Gastrocnemius medialis (tissue), 4 donors: ENCODE measurements at regions of chr13 and their contacts with region 1.

Region 1: GRCh38 chr13:97124916-97125809 is 97.0 kb upstream of the MBNL2 start:
- DNase-seq: peak; percentile 67 to 77
- ATAC-seq: peak; percentile 88 to 92
- H3K4me3 ChIP-seq: peak overlapping the region; percentile 6 to 13 (median 10)
- H3K27ac ChIP-seq: peak overlapping the region; percentile 79 to 84 (median 81)
- H3K4me1 ChIP-seq: peaks cover 30 to 49% of the 10 kb centered on the region in 2 donors
- H3K27me3 ChIP-seq: no peaks in the 10 kb centered on the region
- CTCF ChIP-seq: peak in 3 of 5 experiments; percentile 42 to 43 (median 43)
- POLR2A ChIP-seq: no peak

Region 2: GRCh38 chr13:95676762-95677563 is 1448.2 kb before region 1 on chr13 and contains the start of gene DNAJC3:
- in situ Hi-C with region 1: no loop called
- intact Hi-C with region 1: loop called (anchors 5 kb)
- DNase-seq: peak; percentile 98 to 99
- ATAC-seq: peak; percentile 83 to 85
- H3K4me3 ChIP-seq: peak within 1 kb of the TSS; percentile 77 to 98 (median 82)
- H3K27ac ChIP-seq: peak within 1 kb of the TSS; percentile 98 to 99 (median 98)
- H3K4me1 ChIP-seq: peaks cover 56 to 60% of the 10 kb centered on the region in 2 donors
- H3K27me3 ChIP-seq: no peaks in the 10 kb centered on the region
- CTCF ChIP-seq: no peak
- POLR2A ChIP-seq: peak; percentile 99 to 100
- total RNA-seq, gene DNAJC3: 15.7 to 21.6 (median 20.5) TPM

Region 3: DNA sequence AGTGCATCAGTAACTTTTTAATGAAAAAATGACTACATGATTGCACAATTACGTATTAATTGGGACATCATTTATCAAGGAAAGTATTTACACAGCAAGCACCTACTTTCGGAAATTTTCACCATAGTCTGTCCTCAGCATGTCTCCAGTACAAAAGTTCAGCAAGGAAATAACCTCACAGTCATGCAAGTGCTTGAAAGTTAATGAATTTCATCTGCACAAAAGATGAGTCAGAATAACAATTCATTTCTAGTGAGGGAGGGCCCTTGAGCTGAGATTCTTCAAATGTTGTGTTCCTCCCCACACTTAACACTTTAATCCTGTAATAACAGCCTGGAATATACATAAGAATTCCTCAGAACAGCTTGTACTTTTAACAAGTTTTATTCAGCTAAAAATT is 81.9 kb before region 1 on chr13:
- in situ Hi-C with region 1: no loop called
- intact Hi-C with region 1: no loop called
- DNase-seq: no peak
- ATAC-seq: no peak
- H3K4me3 ChIP-seq: no peak overlapping the region
- H3K27ac ChIP-seq: no peak overlapping the region
- H3K4me1 ChIP-seq: no peaks in the 10 kb centered on the region
- H3K27me3 ChIP-seq: no peaks in the 10 kb centered on the region
- CTCF ChIP-seq: no peak
- POLR2A ChIP-seq: no peak

Region 4: GRCh38 chr13:97205982-97206381 is 80.8 kb after region 1 on chr13:
- in situ Hi-C with region 1: loop called in 3 of 4 experiments (anchors 10 kb)
- intact Hi-C with region 1: no loop called
- DNase-seq: no peak
- ATAC-seq: no peak
- H3K4me3 ChIP-seq: no peak overlapping the region
- H3K27ac ChIP-seq: no peak overlapping the region
- H3K4me1 ChIP-seq: no peaks in the 10 kb centered on the region
- H3K27me3 ChIP-seq: no peaks in the 10 kb centered on the region
- CTCF ChIP-seq: no peak
- POLR2A ChIP-seq: no peak

Region 5: DNA sequence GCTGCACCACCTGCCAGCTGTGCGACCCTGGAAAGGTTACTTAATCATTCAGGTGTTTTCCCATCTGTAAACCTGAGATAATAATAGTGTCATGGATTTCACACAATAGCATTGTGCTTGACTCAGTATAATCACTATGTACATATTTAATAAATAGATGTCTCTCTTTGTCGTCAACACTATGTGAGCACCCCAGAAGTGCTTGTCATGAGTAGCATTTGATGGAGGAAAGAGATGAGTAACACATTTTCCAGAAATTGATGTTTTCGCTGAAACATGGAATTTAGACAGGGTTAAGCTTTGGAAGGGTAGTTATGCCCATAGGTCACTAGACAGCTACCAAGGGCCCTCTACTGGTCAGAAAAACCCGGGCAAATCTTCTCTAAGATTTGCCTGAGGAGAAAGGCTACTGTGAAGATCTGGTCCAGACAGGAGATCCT is 87.5 kb after region 1 on chr13:
- in situ Hi-C with region 1: loop called in 3 of 4 experiments (anchors 10 kb)
- intact Hi-C with region 1: no loop called
- DNase-seq: no peak
- ATAC-seq: peak; percentile 60 to 69
- H3K4me3 ChIP-seq: no peak overlapping the region
- H3K27ac ChIP-seq: no peak overlapping the region
- H3K4me1 ChIP-seq: no peaks in the 10 kb centered on the region
- H3K27me3 ChIP-seq: no peaks in the 10 kb centered on the region
- CTCF ChIP-seq: peak; percentile 42 to 65 (median 53)
- POLR2A ChIP-seq: no peak

Region 6: GRCh38 chr13:97344265-97345175 is 219.4 kb after region 1 on chr13:
- in situ Hi-C with region 1: loop called in 1 of 4 experiments (anchors 10 kb)
- intact Hi-C with region 1: no loop called
- DNase-seq: peak in 1 of 2 donors; percentile 59
- ATAC-seq: peak; percentile 76 to 81
- H3K4me3 ChIP-seq: no peak overlapping the region
- H3K27ac ChIP-seq: peak overlapping the region; percentile 41 to 76 (median 70)
- H3K4me1 ChIP-seq: peaks cover 16 to 25% of the 10 kb centered on the region in 2 donors
- H3K27me3 ChIP-seq: no peaks in the 10 kb centered on the region
- CTCF ChIP-seq: peak; percentile 54 to 73 (median 64)
- POLR2A ChIP-seq: no peak